HEK293 (cell line): ENCODE measurements at regions of chr1 and their contacts with region 1.

Region 1: GRCh38 chr1:236759252-236759859 is 35.7 kb upstream of the MTR start:
- H3K4me3 ChIP-seq: no peak overlapping the region
- H3K27ac ChIP-seq: no peak overlapping the region
- H3K4me1 ChIP-seq: no peaks in the 10 kb centered on the region
- CTCF ChIP-seq: peak; percentile 71

Region 2: DNA sequence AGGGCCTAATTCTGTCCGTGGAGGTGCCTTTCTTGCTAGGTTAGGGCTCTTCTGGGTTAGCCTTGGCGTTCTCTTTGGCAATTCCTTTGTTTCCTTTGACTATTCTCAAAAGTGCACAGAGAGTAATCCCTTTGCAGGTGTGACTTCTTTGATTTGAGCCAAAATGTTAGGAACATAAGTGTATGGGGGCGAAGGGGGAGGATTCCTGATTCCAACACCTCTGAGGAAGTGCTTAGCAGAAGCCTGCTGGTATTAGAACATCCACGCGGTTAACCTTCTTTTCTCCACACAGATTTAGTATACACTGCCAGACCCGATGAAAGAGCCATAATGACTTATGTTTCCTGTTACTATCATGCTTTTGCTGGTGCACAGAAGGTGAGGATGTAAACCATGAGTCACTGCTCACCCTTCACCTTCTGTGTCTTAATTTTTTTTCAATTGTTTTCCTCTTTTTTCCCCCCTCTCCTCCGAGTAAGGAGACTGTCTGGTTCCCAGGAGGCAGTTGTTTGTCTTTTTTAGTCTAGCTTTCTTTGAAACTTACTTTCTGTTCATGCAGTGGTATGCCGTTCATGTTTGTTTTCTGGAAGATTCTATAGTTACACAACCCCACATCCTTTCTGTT is 25.1 kb before region 1 on chr1:
- CTCF ChIA-PET with region 1: interaction called, 14 read pairs
- POLR2A ChIA-PET with region 1: no interaction called
- H3K4me3 ChIP-seq: no peak overlapping the region
- H3K27ac ChIP-seq: no peak overlapping the region
- H3K4me1 ChIP-seq: no peaks in the 10 kb centered on the region
- CTCF ChIP-seq: no peak

Region 3: GRCh38 chr1:236774926-236775325 is 15.6 kb after region 1 on chr1:
- CTCF ChIA-PET with region 1: interaction called, 16 read pairs
- POLR2A ChIA-PET with region 1: no interaction called
- H3K4me3 ChIP-seq: no peak overlapping the region
- H3K27ac ChIP-seq: no peak overlapping the region
- H3K4me1 ChIP-seq: 0 out of 2 replicates have a peak, but pooled peaks cover 2% of the 10 kb centered on the region
- CTCF ChIP-seq: no peak

Region 4: DNA sequence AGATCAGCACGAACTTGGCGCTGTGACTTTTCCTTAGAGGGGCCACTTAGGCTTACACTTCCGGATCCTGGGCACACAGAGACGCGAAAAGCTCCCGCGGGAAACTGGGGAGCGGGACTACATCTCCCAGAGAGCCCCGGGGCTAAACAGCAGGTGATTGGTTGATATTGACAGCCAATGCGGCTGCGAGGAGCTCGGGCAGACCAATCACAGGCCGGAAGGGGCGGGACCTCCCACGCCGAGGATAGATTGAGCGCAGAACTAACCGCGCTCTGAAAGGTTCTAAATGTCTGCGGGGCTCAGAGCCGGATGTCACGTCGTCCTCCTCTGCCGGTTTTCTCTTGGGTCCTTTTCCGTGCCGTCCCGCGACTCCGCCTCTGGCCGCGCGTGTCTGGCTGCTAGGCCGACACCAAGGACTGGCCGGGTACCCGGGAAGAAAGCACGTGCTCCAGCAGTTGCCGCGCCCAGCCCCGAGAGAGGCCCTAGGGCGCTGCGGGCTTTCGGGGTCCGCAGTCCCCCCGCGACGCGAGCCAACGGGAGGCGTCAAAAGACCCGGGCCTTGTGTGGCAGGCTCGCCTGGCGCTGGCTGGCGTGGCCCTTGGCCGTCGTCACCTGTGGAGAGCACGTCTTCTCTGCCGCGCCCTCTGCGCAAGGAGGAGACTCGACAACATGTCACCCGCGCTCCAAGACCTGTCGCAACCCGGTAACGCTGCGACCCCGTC is 35.8 kb after region 1 on chr1 and contains the start of gene MTR:
- CTCF ChIA-PET with region 1: interaction called, 15 read pairs
- POLR2A ChIA-PET with region 1: interaction called, 3 read pairs
- H3K4me3 ChIP-seq: peak within 1 kb of the TSS; percentile 73
- H3K27ac ChIP-seq: peak within 1 kb of the TSS; percentile 78
- H3K4me1 ChIP-seq: peaks cover 6% of the 10 kb centered on the region; the same call in 1 of the 2 replicates
- CTCF ChIP-seq: peak; percentile 74; the same call in 1 of the 2 replicates

Region 5: DNA sequence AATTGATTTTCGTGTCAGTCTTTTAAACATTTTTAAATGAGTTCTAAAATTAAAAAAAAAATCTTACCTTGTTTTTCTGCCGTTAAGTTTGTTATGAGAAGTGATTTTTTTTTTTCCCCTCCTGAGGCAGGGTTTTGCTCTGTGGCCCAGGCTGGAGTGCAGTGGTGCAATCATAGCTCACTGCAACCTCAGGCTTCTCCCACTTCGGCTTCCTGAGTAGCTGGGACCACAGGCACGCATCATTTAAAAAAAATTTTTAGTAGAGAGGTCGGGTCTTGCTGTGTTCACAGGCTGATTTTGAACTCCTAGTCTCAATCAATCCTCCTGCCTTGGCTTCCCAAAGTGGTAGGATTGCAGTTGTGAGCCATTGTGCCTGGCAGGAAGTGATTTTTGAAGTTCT is 76.8 kb after region 1 on chr1:
- CTCF ChIA-PET with region 1: no interaction called
- POLR2A ChIA-PET with region 1: no interaction called
- H3K4me3 ChIP-seq: no peak overlapping the region
- H3K27ac ChIP-seq: no peak overlapping the region
- H3K4me1 ChIP-seq: no peaks in the 10 kb centered on the region
- CTCF ChIP-seq: no peak

Region 6: DNA sequence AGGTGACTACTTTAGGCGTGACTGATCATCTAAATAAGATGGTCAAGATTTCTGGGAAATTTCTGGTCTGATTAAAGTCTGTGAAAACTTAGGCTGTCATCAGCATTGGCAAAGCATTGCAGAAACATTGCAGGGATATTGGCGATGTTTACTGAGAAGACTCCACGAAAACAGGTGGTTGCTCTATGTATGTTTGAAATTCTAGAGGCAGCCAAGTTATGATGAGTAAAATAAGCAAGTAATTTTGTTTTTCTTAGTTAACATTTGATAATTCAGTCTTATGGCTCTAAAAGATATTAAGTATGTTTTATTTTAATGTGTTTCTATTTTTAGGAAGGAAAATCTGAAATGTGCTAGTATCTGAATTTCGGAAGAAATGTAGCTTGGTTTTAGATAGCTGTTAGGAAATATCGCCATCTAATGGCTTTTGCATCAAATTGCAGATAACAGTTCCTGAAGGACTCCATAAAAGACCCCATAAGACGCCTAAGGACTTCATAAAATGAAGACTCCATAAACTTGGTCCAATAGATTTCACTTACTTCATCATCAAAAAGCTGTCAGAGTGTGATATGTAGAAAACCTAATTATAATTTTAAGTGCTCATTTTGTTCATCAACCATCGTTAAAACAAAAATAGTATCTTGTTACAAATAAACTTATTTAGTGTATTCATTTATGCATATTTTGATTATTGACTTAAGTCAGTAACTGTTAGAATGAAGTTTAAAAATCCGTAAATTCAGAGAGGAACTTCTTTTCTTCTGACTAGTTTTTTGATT is 627.2 kb after region 1 on chr1:
- CTCF ChIA-PET with region 1: interaction called, 77 read pairs
- POLR2A ChIA-PET with region 1: no interaction called
- H3K4me3 ChIP-seq: no peak overlapping the region
- H3K27ac ChIP-seq: no peak overlapping the region
- H3K4me1 ChIP-seq: no peaks in the 10 kb centered on the region
- CTCF ChIP-seq: peak; percentile 75

Region 7: DNA sequence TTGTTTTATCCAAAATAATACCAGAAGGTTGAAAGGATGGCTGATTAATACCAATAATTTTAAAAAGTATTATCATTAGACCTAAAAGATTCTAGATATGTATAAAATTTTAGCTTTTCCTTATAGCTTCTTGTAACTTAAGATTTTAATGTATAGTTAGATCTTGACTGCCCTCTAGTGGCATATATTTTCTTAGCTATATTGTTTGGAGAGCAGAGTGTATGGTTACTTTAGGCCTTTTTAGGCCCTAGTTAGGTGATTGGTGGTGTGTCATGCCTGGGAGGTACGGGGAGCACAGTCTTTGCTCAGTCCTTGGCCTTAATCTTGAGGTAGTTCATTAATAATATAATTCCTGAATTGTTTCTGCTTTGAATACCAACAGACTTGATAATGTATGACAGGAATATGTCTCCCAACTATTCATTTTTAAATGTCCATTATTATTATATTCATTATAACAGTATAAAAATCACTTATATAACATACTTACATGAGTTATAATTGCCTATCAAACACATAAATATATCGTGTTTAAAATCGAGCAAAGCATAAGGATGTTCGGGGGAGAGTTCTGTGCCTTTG is 803.0 kb after region 1 on chr1:
- CTCF ChIA-PET with region 1: interaction called, 21 read pairs
- POLR2A ChIA-PET with region 1: no interaction called
- H3K4me3 ChIP-seq: no peak overlapping the region
- H3K27ac ChIP-seq: no peak overlapping the region
- H3K4me1 ChIP-seq: no peaks in the 10 kb centered on the region
- CTCF ChIP-seq: peak; percentile 68; the same call in 1 of the 2 replicates